ENCODE measurements at regions of chr15 and their contacts with region 1.

Region 1: GRCh38 chr15:54502416-54503075 is 524.3 kb downstream of the UNC13C start:
- DNase-seq: no peak
- ATAC-seq: no peak
- H3K4me3 ChIP-seq: no peak overlapping the region
- H3K27ac ChIP-seq: no peak overlapping the region
- H3K4me1 ChIP-seq: no peaks in the 10 kb centered on the region
- H3K27me3 ChIP-seq: no peaks in the 10 kb centered on the region
- CTCF ChIP-seq: no peak

Region 2: DNA sequence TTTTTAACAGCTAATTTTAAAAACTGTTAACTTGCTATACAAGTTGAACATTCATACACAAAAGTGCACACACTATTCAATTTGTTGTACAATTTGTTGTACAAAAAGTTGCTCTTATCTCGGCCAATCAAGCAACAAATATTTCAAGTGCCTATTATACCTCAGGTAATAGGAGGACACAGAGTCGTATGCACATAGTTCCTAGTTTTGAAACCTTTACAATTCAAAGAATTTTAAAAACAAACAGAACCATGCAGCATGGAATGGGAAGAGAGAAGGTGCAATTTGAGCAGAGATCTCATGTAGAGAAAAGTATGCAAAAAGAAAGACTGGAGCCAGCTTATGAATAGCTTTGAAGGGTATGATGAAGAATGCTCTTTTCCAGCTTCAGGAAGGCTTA is 1887.3 kb before region 1 on chr15:
- intact Hi-C with region 1: loop called in 1 of 10 experiments (anchors 10 kb)
- DNase-seq: no peak
- ATAC-seq: no peak
- H3K4me3 ChIP-seq: no peak overlapping the region
- H3K27ac ChIP-seq: no peak overlapping the region
- H3K4me1 ChIP-seq: no peaks in the 10 kb centered on the region
- H3K27me3 ChIP-seq: no peaks in the 10 kb centered on the region
- CTCF ChIP-seq: no peak

Region 3: DNA sequence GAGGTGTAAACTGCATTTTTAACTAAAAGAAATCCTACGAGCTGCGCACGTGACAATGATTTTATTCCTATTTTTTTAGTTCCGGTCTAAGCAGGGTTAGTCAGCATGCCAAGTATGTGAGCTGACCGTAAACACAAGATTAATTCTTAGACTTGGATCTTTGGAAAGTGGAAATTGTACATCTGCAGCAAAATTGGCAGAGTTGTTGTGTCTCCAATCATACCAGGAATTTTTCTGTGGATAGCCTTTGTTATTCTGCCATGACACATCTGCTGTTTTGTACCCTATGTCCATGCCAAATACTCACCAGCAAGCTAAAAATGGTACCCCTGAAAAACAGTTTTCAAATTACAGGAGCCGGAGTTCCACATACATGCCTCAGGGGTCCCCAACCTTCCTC is 38.2 kb after region 1 on chr15:
- intact Hi-C with region 1: loop called in 1 of 10 experiments (anchors 2 kb)
- DNase-seq: no peak
- ATAC-seq: no peak
- H3K4me3 ChIP-seq: no peak overlapping the region
- H3K27ac ChIP-seq: no peak overlapping the region
- H3K4me1 ChIP-seq: no peaks in the 10 kb centered on the region
- H3K27me3 ChIP-seq: no peaks in the 10 kb centered on the region
- CTCF ChIP-seq: no peak

Region 4: DNA sequence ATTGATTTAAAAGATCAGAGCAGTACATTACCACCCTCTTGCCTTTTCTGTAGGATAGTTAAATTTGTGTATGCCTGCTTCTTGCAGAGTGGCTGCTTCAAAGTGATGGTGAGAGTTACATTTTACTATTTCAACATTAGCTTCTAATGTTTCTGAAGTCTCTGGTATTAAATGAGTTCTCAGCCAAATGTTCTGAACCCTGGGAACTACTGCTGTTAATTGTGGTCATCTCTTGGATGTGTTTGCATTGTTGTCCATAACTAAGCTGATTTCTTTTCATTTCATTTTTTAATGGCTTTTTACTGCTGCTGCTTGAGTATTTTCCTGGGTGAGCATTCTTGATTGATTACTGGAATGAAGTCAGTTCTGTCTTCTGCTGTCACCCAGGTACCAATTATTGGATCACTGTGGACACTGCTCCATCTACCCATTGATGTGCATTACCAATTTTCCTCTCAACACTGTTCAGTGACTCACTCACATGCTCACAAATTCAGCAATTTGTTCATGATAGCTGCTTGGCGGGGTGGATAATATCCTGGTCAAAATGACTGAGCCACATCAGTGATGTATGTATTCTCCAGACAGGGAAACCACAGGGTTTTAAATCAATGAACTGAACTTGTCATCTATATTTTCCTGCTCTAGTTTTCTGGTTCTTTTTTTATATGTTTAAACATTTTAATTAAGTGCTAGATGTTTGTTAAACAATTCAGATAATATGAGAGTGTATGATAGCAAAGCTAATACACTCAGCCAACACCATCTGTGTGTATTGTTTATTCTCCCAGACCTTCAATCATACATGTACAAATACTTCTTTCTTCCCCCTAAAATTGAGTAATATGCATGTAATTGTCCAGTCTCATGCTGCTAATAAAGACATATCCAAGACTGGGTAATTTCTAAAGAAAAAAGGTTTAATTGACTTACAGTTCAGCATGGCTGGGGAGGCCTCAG is 106.6 kb after region 1 on chr15:
- intact Hi-C with region 1: no loop called
- DNase-seq: no peak
- ATAC-seq: no peak
- H3K4me3 ChIP-seq: no peak overlapping the region
- H3K27ac ChIP-seq: no peak overlapping the region
- H3K4me1 ChIP-seq: no peaks in the 10 kb centered on the region
- H3K27me3 ChIP-seq: no peaks in the 10 kb centered on the region
- CTCF ChIP-seq: no peak